ENCODE measurements at regions of chr1 and their contacts with region 1.

Region 1: GRCh38 chr1:26102526-26102925 is 9.1 kb upstream of the PDIK1L start:
- DNase-seq: no peak
- ATAC-seq: no peak
- H3K4me3 ChIP-seq: no peak overlapping the region
- H3K4me3 Mint-ChIP-seq: no peak overlapping the region
- H3K27ac ChIP-seq: no peak overlapping the region
- H3K27ac Mint-ChIP-seq: no peak overlapping the region
- H3K4me1 ChIP-seq: no peaks in the 10 kb centered on the region
- H3K4me1 Mint-ChIP-seq: peaks cover 3% of the 10 kb centered on the region
- H3K27me3 ChIP-seq: peaks cover 0 to 3% of the 10 kb centered on the region in 2 experiments
- H3K27me3 Mint-ChIP-seq: peaks cover 3% of the 10 kb centered on the region
- CTCF ChIP-seq: no peak

Region 2: GRCh38 chr1:26126321-26127084 is 24.0 kb after region 1 on chr1:
- CTCF ChIA-PET with region 1: interaction called, 14 read pairs
- POLR2A ChIA-PET with region 1: interaction called, 3 read pairs
- intact Hi-C with region 1: no loop called
- DNase-seq: peak; percentile 18 to 94 (median 58)
- ATAC-seq: peak; percentile 98
- H3K4me3 ChIP-seq: peak overlapping the region in 1 of 2 experiments; percentile 12
- H3K4me3 Mint-ChIP-seq: peak overlapping the region; percentile 54
- H3K27ac ChIP-seq: peak overlapping the region; percentile 16 to 21
- H3K27ac Mint-ChIP-seq: peak overlapping the region; percentile 88
- H3K4me1 ChIP-seq: peaks cover 26% of the 10 kb centered on the region
- H3K4me1 Mint-ChIP-seq: peaks cover 40% of the 10 kb centered on the region
- H3K27me3 ChIP-seq: peaks cover 0 to 7% of the 10 kb centered on the region in 2 experiments
- H3K27me3 Mint-ChIP-seq: no peaks in the 10 kb centered on the region
- CTCF ChIP-seq: no peak

Region 3: GRCh38 chr1:26164036-26164860 is 61.7 kb after region 1 on chr1:
- CTCF ChIA-PET with region 1: interaction called, 6 read pairs
- POLR2A ChIA-PET with region 1: no interaction called
- intact Hi-C with region 1: loop called (anchors 1 kb)
- DNase-seq: peak in 8 of 9 experiments; percentile 28 to 76 (median 50)
- ATAC-seq: peak; percentile 76
- H3K4me3 ChIP-seq: peak overlapping the region in 1 of 2 experiments; percentile 50
- H3K4me3 Mint-ChIP-seq: peak overlapping the region; percentile 61
- H3K27ac ChIP-seq: no peak overlapping the region
- H3K27ac Mint-ChIP-seq: no peak overlapping the region
- H3K4me1 ChIP-seq: peaks cover 18% of the 10 kb centered on the region
- H3K4me1 Mint-ChIP-seq: peaks cover 10% of the 10 kb centered on the region
- H3K27me3 ChIP-seq: peaks cover 14 to 18% of the 10 kb centered on the region in 2 experiments
- H3K27me3 Mint-ChIP-seq: peaks cover 17% of the 10 kb centered on the region
- CTCF ChIP-seq: peak; percentile 84

Region 4: DNA sequence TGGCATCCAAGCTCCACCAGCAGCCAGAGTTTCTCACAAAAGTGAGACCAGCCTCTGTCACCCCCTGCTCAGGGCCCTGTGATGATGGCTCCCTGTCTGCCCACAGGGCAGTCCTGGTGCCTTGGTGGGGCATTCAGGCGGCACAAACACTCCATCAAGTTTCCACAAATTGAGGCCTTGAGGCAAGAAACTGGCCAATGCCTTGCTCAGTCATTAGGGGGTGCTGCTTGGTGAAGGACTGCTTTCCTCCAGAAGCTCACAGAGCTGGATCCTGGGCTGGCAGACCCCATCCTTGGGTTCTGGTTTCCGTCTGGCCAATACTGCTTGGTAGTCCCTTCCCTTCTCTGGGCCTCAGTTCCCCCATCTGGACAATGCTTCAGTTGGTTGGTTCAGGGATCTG is 1513.9 kb after region 1 on chr1:
- CTCF ChIA-PET with region 1: no interaction called
- POLR2A ChIA-PET with region 1: no interaction called
- intact Hi-C with region 1: no loop called
- DNase-seq: peak in 1 of 9 experiments; percentile 19
- ATAC-seq: no peak
- H3K4me3 ChIP-seq: no peak overlapping the region
- H3K4me3 Mint-ChIP-seq: no peak overlapping the region
- H3K27ac ChIP-seq: peak overlapping the region in 1 of 2 experiments; percentile 80
- H3K27ac Mint-ChIP-seq: peak overlapping the region; percentile 84
- H3K4me1 ChIP-seq: peaks cover 65% of the 10 kb centered on the region
- H3K4me1 Mint-ChIP-seq: peaks cover 65% of the 10 kb centered on the region
- H3K27me3 ChIP-seq: no peaks in the 10 kb centered on the region
- H3K27me3 Mint-ChIP-seq: no peaks in the 10 kb centered on the region
- CTCF ChIP-seq: no peak

Measured in CD8-positive, alpha-beta T cell (primary cell).